ENCODE measurements at regions of chr11 and their contacts with region 1.

Region 1: GRCh38 chr11:93197380-93198214 is at the start of gene SLC36A4:
- DNase-seq: peak; percentile 96
- H3K4me3 ChIP-seq: peak within 1 kb of the TSS; percentile 70 to 95 (median 82)
- H3K27ac ChIP-seq: peak within 1 kb of the TSS; percentile 95
- H3K4me1 ChIP-seq: peaks cover 4% of the 10 kb centered on the region
- H3K27me3 ChIP-seq: peaks cover 6 to 8% of the 10 kb centered on the region in 2 experiments
- CTCF ChIP-seq: no peak
- POLR2A ChIP-seq: peak; percentile 84
- total RNA-seq, gene SLC36A4: 16.8 and 21.7 TPM in 2 replicates

Region 2: GRCh38 chr11:93169950-93170561 is 27.5 kb before region 1 on chr11:
- CTCF ChIA-PET with region 1: interaction called, 3 read pairs
- POLR2A ChIA-PET with region 1: no interaction called
- dilution Hi-C with region 1: no loop called
- intact Hi-C with region 1: loop called (anchors 2 kb)
- DNase-seq: peak; percentile 40
- H3K4me3 ChIP-seq: no peak overlapping the region
- H3K27ac ChIP-seq: no peak overlapping the region
- H3K4me1 ChIP-seq: peaks cover 6% of the 10 kb centered on the region
- H3K27me3 ChIP-seq: no peaks in the 10 kb centered on the region
- CTCF ChIP-seq: peak in 1 of 2 donors; percentile 35
- POLR2A ChIP-seq: no peak

Region 3: DNA sequence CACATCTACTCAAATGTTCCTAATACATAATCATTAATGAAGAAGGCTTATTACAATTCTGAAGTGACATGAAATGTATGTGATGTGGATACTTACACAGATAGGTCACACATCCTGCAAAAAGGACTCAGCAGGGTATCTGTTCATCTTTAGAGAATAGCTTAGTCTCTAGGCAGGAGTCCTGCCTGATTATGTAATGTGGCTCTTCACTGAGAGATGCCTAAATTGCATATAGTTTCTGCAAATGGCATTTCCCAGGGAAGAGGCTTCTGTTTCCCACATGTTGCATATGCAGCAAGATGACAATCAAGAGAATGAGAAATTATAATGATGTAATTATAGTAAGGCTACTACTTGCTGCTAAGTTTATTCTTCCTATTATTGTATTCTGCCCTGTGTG is 59.0 kb after region 1 on chr11:
- CTCF ChIA-PET with region 1: no interaction called
- POLR2A ChIA-PET with region 1: no interaction called
- dilution Hi-C with region 1: no loop called
- intact Hi-C with region 1: no loop called
- DNase-seq: no peak
- H3K4me3 ChIP-seq: no peak overlapping the region
- H3K27ac ChIP-seq: no peak overlapping the region
- H3K4me1 ChIP-seq: no peaks in the 10 kb centered on the region
- H3K27me3 ChIP-seq: no peaks in the 10 kb centered on the region
- CTCF ChIP-seq: no peak
- POLR2A ChIP-seq: no peak